Panc1 (cell line): ENCODE measurements at regions of chr7 and their contacts with region 1.

Region 1: GRCh38 chr7:2313450-2314208 is 612 bp downstream of the SNX8 start:
- DNase-seq: no peak
- ATAC-seq: peak; percentile 62
- H3K4me3 ChIP-seq: peak overlapping the region; percentile 75 to 94
- H3K27ac ChIP-seq: peak overlapping the region; percentile 80
- H3K4me1 ChIP-seq: peaks cover 14% of the 10 kb centered on the region
- H3K27me3 ChIP-seq: no peaks in the 10 kb centered on the region
- CTCF ChIP-seq: no peak

Region 2: GRCh38 chr7:2214636-2215035 is 99.0 kb before region 1 on chr7:
- CTCF ChIA-PET with region 1: no interaction called
- POLR2A ChIA-PET with region 1: interaction called, 11 read pairs
- in situ Hi-C with region 1: no loop called
- intact Hi-C with region 1: no loop called
- DNase-seq: no peak
- ATAC-seq: no peak
- H3K4me3 ChIP-seq: no peak overlapping the region
- H3K27ac ChIP-seq: no peak overlapping the region
- H3K4me1 ChIP-seq: no peaks in the 10 kb centered on the region
- H3K27me3 ChIP-seq: no peaks in the 10 kb centered on the region
- CTCF ChIP-seq: no peak

Region 3: GRCh38 chr7:2281541-2281940 is 32.1 kb before region 1 on chr7:
- CTCF ChIA-PET with region 1: no interaction called
- POLR2A ChIA-PET with region 1: interaction called, 15 read pairs
- in situ Hi-C with region 1: no loop called
- intact Hi-C with region 1: no loop called
- DNase-seq: no peak
- ATAC-seq: no peak
- H3K4me3 ChIP-seq: no peak overlapping the region
- H3K27ac ChIP-seq: no peak overlapping the region
- H3K4me1 ChIP-seq: no peaks in the 10 kb centered on the region
- H3K27me3 ChIP-seq: no peaks in the 10 kb centered on the region
- CTCF ChIP-seq: no peak

Region 4: DNA sequence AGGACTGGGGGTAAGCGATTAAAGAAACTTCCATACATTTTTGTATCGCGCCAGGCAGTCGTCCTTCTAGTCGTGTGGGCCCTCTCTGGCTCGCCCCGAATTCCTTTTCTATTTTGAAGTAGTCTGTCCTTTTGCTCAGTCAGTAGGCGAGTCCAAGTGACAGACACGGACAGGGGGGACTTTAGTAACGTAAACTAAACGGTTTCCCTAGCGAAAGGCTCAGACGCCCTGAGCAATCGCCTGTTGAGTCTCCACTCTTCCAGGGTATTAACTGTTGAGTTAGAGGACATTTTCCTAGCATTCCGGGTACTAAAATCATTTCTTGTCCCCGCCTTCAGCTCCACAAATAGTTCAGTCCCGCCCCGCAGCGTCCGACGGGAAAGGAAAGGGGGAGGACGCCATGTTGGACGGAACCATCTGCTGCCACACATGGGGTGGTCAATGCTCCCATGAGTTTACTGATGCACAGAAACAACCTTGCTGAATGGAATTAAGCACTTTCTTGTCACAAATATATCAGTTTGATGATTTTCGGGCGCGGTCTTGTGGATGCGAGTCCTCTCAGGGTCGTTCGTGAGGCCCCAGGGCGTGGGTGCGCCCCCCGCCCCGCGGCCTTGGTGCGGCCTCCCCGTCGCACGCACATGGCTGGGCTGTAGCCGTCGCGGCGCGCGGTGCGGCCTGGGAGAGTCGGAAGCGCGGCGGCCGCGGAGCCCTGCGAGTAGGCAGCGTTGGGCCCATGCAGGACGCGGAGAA is 40.7 kb after region 1 on chr7 and contains the start of gene EIF3B:
- CTCF ChIA-PET with region 1: no interaction called
- POLR2A ChIA-PET with region 1: interaction called, 13 read pairs
- in situ Hi-C with region 1: no loop called
- intact Hi-C with region 1: no loop called
- DNase-seq: peak; percentile 94
- ATAC-seq: peak; percentile 92
- H3K4me3 ChIP-seq: peak within 1 kb of the TSS; percentile 64 to 98
- H3K27ac ChIP-seq: peak within 1 kb of the TSS; percentile 99
- H3K4me1 ChIP-seq: peaks cover 13% of the 10 kb centered on the region
- H3K27me3 ChIP-seq: no peaks in the 10 kb centered on the region
- CTCF ChIP-seq: no peak
- total RNA-seq, gene EIF3B: 432 TPM

Region 5: DNA sequence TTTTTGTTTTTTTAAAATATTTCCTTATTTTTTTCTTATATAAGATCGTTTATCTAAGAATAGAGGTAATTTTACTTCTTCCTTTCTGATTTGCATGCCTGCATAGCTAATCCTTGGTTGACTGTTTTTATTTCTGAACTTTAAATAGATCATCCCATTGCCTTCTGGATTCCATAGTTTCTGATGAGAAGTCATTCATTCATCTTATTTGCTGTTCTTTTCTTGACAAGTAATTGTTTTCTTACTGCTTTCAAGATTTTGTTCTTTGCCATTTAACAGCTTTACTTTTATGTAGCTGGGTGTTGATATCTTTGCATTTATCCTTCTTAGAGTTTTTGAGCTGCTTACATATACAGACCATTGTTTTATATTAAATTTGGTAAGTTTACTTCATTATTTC is 1425.3 kb after region 1 on chr7:
- CTCF ChIA-PET with region 1: no interaction called
- POLR2A ChIA-PET with region 1: no interaction called
- in situ Hi-C with region 1: no loop called
- intact Hi-C with region 1: no loop called
- DNase-seq: no peak
- ATAC-seq: no peak
- H3K4me3 ChIP-seq: no peak overlapping the region
- H3K27ac ChIP-seq: no peak overlapping the region
- H3K4me1 ChIP-seq: no peaks in the 10 kb centered on the region
- H3K27me3 ChIP-seq: no peaks in the 10 kb centered on the region
- CTCF ChIP-seq: no peak